Activated CD8-positive, alpha-beta memory T cell treated with anti-CD3 and anti-CD28 coated beads, Interleukin-2, amount 10 ng/mL, durations not matched to agents 7 days and 5 days (primary cell): ENCODE measurements at regions of chr11 and their contacts with region 1.

Region 1: GRCh38 chr11:134863294-134863693 is 451.3 kb upstream of the B3GAT1 start:
- DNase-seq: no peak
- ATAC-seq: no peak
- H3K4me3 Mint-ChIP-seq: no peak overlapping the region
- H3K27ac Mint-ChIP-seq: no peak overlapping the region
- H3K4me1 Mint-ChIP-seq: peaks cover 2% of the 10 kb centered on the region
- H3K27me3 Mint-ChIP-seq: peaks cover 3% of the 10 kb centered on the region

Region 2: GRCh38 chr11:134878785-134879184 is 15.5 kb after region 1 on chr11:
- CTCF ChIA-PET with region 1: interaction called, 10 read pairs
- DNase-seq: no peak
- ATAC-seq: no peak
- H3K4me3 Mint-ChIP-seq: no peak overlapping the region
- H3K27ac Mint-ChIP-seq: no peak overlapping the region
- H3K4me1 Mint-ChIP-seq: no peaks in the 10 kb centered on the region
- H3K27me3 Mint-ChIP-seq: peaks cover 7% of the 10 kb centered on the region